Breast epithelium (tissue), 4 donors: ENCODE measurements at regions of chr11 and their contacts with region 1.

Region 1: GRCh38 chr11:79744941-79745340 is 304.1 kb upstream of the TENM4 start:
- DNase-seq: no peak
- H3K4me3 ChIP-seq: no peak overlapping the region
- H3K27ac ChIP-seq: no peak overlapping the region
- H3K4me1 ChIP-seq: no peaks in the 10 kb centered on the region
- H3K27me3 ChIP-seq: no peaks in the 10 kb centered on the region
- CTCF ChIP-seq: no peak
- POLR2A ChIP-seq: no peak

Region 2: GRCh38 chr11:79631686-79632085 is 113.3 kb before region 1 on chr11:
- intact Hi-C with region 1: no loop called
- DNase-seq: no peak
- H3K4me3 ChIP-seq: no peak overlapping the region
- H3K27ac ChIP-seq: no peak overlapping the region
- H3K4me1 ChIP-seq: no peaks in the 10 kb centered on the region
- H3K27me3 ChIP-seq: no peaks in the 10 kb centered on the region
- CTCF ChIP-seq: no peak
- POLR2A ChIP-seq: no peak

Region 3: DNA sequence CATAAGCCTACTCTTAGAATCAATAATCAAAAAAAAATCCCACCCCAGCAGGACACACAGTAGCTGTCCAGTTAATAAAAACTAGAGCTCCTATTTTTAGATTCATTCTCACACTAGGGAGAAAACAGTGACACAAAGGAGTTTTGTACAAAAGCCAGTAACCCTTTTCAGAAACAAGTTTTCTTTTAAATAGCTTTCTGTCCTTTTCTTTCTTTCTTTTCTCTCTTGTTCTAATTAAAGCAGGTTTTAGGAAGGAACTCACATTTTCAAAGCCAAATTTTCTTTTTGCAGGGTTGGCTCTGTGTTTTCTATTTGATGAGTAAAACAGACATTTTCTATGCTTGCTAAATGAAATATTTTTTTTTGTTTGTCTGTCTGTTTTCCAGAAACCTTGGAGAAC is 1598.0 kb after region 1 on chr11:
- intact Hi-C with region 1: loop called (anchors 10 kb)
- DNase-seq: no peak
- H3K4me3 ChIP-seq: no peak overlapping the region
- H3K27ac ChIP-seq: no peak overlapping the region
- H3K4me1 ChIP-seq: no peaks in the 10 kb centered on the region
- H3K27me3 ChIP-seq: no peaks in the 10 kb centered on the region
- CTCF ChIP-seq: no peak
- POLR2A ChIP-seq: no peak

Region 4: DNA sequence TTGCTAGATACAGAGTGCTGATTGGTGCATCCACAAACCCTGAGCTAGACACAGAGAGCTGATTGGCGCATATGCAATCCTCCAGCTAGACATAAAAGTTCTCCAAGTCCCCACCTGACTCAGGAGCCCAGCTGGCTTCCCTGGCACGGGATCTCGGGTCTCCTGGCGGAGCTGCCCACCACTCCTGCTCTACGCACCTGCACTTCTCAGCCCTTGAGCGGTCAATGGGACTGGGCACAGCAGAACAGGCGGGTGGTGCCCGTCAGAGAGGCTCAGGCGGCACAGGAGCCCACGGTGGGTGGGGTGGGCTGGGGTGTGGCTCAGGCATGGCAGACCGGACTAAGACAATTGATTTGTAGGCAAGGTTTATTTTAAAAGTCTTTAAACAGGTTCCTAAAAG is 1623.3 kb after region 1 on chr11:
- intact Hi-C with region 1: loop called (anchors 5 kb)
- DNase-seq: no peak
- H3K4me3 ChIP-seq: no peak overlapping the region
- H3K27ac ChIP-seq: no peak overlapping the region
- H3K4me1 ChIP-seq: no peaks in the 10 kb centered on the region
- H3K27me3 ChIP-seq: no peaks in the 10 kb centered on the region
- CTCF ChIP-seq: no peak
- POLR2A ChIP-seq: no peak